Vagina (tissue), 2 donors: ENCODE measurements at regions of chr9 and their contacts with region 1.

Region 1: DNA sequence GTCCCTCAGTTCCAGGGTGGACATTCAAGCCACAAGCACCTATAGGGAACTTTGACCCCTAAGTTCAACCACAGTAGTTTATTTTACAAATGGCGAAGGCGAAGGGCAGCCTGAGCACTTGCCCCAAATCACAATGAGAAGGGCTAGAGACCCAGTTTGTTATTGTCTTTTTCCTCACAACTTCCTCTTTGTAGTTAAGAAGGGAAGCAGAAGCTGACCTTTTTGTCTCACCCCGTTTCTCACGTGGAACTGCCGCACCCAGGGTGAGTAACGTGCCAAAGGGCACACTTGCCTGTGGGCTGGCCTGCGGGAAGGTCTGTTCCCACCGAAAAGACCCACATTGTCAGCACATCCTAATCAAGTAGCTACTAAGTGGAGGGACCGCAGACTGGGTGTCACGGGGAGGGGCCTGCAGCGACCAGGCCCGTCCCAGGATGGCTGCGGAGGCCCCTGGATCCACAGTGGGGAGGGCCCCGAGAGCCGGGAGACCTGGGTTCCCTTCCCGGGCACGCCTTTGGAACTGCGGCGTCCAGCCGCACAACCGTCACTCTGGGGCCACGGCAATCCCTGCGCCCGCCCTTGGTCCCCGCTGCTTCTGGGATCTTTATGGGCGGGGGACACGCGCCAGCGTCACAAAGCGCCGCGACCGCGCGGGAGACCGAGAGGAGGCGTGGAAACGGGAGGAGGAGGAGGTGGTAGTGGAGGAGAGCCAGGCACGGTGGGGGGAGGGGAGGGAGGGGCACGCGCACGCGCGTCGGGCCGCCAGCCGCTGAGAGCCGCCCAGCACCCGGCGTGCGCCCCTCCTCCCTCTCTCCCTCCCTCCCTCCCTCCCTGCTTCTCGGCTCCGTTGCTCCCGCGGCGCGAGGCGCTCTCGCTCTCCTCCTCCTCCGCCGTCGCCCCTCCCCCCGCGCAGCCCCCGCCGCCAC is at the start of gene UBE2R2:
- DNase-seq: peak in 1 of 2 donors; percentile 94
- H3K4me3 ChIP-seq: peak within 1 kb of the TSS; percentile 97 to 98
- H3K27ac ChIP-seq: peak within 1 kb of the TSS; percentile 100
- H3K4me1 ChIP-seq: peaks cover 54% of the 10 kb centered on the region
- H3K27me3 ChIP-seq: no peaks in the 10 kb centered on the region
- CTCF ChIP-seq: no peak
- POLR2A ChIP-seq: peak in 1 of 2 donors; percentile 67
- total RNA-seq, gene UBE2R2: 20.4 TPM

Region 2: GRCh38 chr9:33852216-33852826 is 35.7 kb after region 1 on chr9:
- intact Hi-C with region 1: loop called (anchors 5 kb)
- DNase-seq: no peak
- H3K4me3 ChIP-seq: no peak overlapping the region
- H3K27ac ChIP-seq: peak overlapping the region; percentile 20
- H3K4me1 ChIP-seq: peaks cover 62% of the 10 kb centered on the region
- H3K27me3 ChIP-seq: no peaks in the 10 kb centered on the region
- CTCF ChIP-seq: peak; percentile 22 to 59 (median 47)
- POLR2A ChIP-seq: no peak